Colonic mucosa (tissue), 4 donors: ENCODE measurements at regions of chr19 and their contacts with region 1.

Region 1: DNA sequence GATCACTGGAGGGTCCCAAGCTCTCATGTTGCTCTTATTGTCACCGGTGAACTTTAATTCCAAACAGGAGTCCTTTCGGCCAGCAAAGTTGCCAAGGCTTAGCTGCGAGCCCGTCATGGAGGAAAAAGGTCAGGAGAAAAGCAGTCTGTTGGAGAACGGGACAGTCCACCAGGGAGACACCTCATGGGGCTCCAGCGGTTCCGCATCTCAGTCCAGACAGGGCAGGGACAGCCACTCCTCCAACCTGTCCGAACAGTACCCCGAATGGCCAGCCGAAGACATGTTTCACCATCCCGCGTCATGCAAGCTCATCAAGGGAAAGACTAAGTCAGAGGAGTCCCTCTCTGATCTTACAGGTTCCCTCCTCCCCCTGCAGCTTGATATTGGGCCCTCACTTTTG is 10.4 kb downstream of the ZNF91 start:
- DNase-seq: no peak
- H3K4me3 ChIP-seq: no peak overlapping the region
- H3K27ac ChIP-seq: no peak overlapping the region
- H3K4me1 ChIP-seq: no peaks in the 10 kb centered on the region
- H3K27me3 ChIP-seq: no peaks in the 10 kb centered on the region
- CTCF ChIP-seq: no peak

Region 2: GRCh38 chr19:23321948-23322549 is 62.8 kb before region 1 on chr19:
- intact Hi-C with region 1: no loop called
- DNase-seq: no peak
- H3K4me3 ChIP-seq: no peak overlapping the region
- H3K27ac ChIP-seq: no peak overlapping the region
- H3K4me1 ChIP-seq: no peaks in the 10 kb centered on the region
- H3K27me3 ChIP-seq: no peaks in the 10 kb centered on the region
- CTCF ChIP-seq: no peak

Region 3: GRCh38 chr19:23686621-23687423 is 302.0 kb after region 1 on chr19 and contains the start of gene ZNF675:
- intact Hi-C with region 1: loop called (anchors 10 kb)
- DNase-seq: peak; percentile 93
- H3K4me3 ChIP-seq: peak within 1 kb of the TSS; percentile 83
- H3K27ac ChIP-seq: peak within 1 kb of the TSS; percentile 94
- H3K4me1 ChIP-seq: no peaks in the 10 kb centered on the region
- H3K27me3 ChIP-seq: no peaks in the 10 kb centered on the region
- CTCF ChIP-seq: no peak
- total RNA-seq, gene ZNF675: 10.3 to 13.2 TPM